Activated CD4-positive, alpha-beta memory T cell treated with anti-CD3 and anti-CD28 coated beads, Interleukin-2, amount 10 ng/mL, durations not matched to agents 7 days and 5 days (primary cell): ENCODE measurements at regions of chr17 and their contacts with region 1.

Region 1: DNA sequence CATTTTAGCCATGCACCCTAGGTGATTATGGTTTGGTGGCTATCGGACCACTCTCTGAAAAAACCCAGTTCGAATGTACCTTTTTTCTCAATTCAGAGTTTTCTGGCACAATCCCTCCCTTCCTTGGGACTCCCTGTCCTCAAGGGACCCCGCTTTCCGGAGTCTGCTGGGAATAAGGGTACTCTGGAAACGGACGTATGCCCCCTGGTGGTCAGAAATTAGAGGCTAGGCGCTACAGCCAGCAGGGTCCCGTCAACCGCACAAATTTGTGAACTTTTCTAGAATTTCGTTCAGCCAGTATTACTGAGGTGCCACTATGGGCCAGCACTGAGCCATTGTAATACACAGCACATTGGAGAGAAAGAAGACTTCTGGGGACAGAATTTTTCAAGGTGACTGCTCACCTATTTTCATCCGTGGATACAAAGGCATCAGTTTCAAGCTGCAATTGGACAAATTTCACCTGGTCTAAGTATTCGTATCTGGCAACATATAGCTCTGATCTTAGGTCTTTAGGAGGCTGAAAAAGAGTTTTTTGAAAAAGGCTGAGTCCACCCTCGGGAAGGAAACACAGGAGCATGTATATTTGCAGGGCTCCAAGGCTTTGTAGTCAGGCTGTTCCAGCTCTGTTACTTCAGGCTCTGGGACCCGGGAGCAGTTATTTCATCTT is 27.1 kb upstream of the CRYBA1 start:
- DNase-seq: peak; percentile 72
- H3K4me3 Mint-ChIP-seq: no peak overlapping the region
- H3K27ac Mint-ChIP-seq: no peak overlapping the region
- H3K4me1 Mint-ChIP-seq: peaks cover 6% of the 10 kb centered on the region
- H3K27me3 Mint-ChIP-seq: peaks cover 4% of the 10 kb centered on the region

Region 2: GRCh38 chr17:29124117-29124924 is 95.2 kb before region 1 on chr17:
- CTCF ChIA-PET with region 1: interaction called, 57 read pairs
- POLR2A ChIA-PET with region 1: interaction called, 4 read pairs
- DNase-seq: peak; percentile 53
- H3K4me3 Mint-ChIP-seq: no peak overlapping the region
- H3K27ac Mint-ChIP-seq: no peak overlapping the region
- H3K4me1 Mint-ChIP-seq: peaks cover 8% of the 10 kb centered on the region
- H3K27me3 Mint-ChIP-seq: no peaks in the 10 kb centered on the region

Region 3: DNA sequence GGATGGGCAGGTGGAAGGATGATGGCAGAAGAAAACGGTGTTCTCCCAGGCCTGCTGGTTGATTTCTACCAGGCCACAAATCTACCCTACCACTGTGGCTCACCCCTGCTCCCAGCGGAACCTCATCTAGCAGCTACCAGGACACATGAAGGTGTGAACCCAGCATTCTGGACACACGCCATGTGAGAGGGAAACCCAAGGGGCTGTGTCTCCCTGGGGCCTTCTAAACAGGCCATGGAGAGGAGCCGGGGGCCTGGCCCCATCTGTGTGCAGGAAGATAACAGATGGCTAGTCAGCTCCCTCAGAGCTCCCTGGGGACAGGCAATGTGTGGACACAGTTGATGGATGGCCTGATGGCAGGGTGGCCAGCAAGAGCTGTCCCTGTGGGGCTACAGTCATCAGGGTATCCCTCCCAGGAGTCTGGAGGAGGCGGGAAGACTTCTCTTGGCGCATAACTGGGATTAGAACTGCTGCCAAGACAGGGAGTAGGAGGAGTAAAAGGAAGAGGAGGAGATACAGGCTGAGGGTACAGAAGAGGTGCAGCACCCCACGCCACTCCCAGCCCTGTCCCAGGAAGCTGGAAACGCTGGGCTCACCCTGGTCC is 56.7 kb before region 1 on chr17:
- CTCF ChIA-PET with region 1: no interaction called
- POLR2A ChIA-PET with region 1: no interaction called
- DNase-seq: no peak
- H3K4me3 Mint-ChIP-seq: no peak overlapping the region
- H3K27ac Mint-ChIP-seq: no peak overlapping the region
- H3K4me1 Mint-ChIP-seq: peaks cover 17% of the 10 kb centered on the region
- H3K27me3 Mint-ChIP-seq: no peaks in the 10 kb centered on the region

Region 4: GRCh38 chr17:29233301-29233700 is 13.8 kb after region 1 on chr17:
- CTCF ChIA-PET with region 1: interaction called, 10 read pairs
- POLR2A ChIA-PET with region 1: no interaction called
- DNase-seq: no peak
- H3K4me3 Mint-ChIP-seq: no peak overlapping the region
- H3K27ac Mint-ChIP-seq: no peak overlapping the region
- H3K4me1 Mint-ChIP-seq: no peaks in the 10 kb centered on the region
- H3K27me3 Mint-ChIP-seq: peaks cover 9% of the 10 kb centered on the region

Region 5: GRCh38 chr17:29393451-29393850 is 173.9 kb after region 1 on chr17:
- CTCF ChIA-PET with region 1: no interaction called
- POLR2A ChIA-PET with region 1: no interaction called
- DNase-seq: no peak
- H3K4me3 Mint-ChIP-seq: no peak overlapping the region
- H3K27ac Mint-ChIP-seq: no peak overlapping the region
- H3K4me1 Mint-ChIP-seq: peaks cover 40% of the 10 kb centered on the region
- H3K27me3 Mint-ChIP-seq: no peaks in the 10 kb centered on the region

Region 6: GRCh38 chr17:29640413-29640812 is 420.9 kb after region 1 on chr17:
- CTCF ChIA-PET with region 1: no interaction called
- POLR2A ChIA-PET with region 1: no interaction called
- DNase-seq: no peak
- H3K4me3 Mint-ChIP-seq: no peak overlapping the region
- H3K27ac Mint-ChIP-seq: no peak overlapping the region
- H3K4me1 Mint-ChIP-seq: peaks cover 19% of the 10 kb centered on the region
- H3K27me3 Mint-ChIP-seq: no peaks in the 10 kb centered on the region